Activated T-helper 1 cell treated with anti-CD3 and anti-CD28 coated beads, Interleukin-12 subunit alpha, Interleukin-12 subunit beta, Interleukin-2, Interleukin-4 antibody, amounts not matched to agents 30 ng/mL and 10 ng/mL and 1 ng/mL, durations not matched to agents 14 hours and 24 hours and 36 hours (primary cell): ENCODE measurements at regions of chr3 and their contacts with region 1.

Region 1: DNA sequence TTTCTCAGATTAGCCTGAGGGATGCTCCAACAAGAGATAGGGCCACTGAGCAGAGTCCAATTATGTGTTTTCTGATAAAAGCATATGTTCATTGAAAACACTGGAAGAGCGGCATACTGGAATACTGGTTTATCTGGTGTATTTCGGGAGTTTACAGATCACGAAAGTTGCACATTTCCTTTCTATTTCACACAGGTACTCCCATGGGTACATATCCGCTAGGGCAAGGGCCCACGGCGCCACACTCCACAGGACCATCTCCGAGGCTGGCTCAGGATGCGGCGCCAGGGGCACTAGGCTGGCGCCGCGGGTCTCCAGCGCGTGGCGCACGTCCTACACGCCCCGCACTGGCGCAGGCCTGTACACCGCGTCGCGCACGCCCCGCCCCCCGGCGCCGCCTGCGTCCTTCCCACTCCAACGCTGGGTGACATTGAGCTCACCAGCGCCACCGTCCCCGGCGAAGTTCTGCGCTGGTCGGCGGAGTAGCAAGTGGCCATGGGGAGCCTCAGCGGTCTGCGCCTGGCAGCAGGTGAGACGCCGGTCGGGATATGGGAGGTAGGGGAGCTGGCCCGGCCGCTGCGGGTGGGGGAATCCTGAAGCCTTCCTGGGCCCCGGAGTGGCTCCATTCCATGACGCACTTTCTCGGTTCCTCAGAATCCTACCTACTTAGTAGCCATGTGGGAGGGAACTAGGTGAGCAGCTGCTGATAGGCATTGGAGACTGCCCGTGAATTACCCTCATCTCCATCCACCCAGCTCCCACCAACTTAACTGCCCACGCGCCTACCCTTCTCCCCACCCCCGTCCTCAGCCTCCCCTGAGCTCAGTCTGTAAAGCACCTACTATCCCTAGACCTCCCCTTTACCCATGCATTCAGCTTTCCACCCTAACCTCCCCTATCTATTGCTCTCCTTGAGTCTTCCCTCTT is at the start of gene FAM162A:
- DNase-seq: peak; percentile 93
- H3K4me3 Mint-ChIP-seq: peak within 1 kb of the TSS; percentile 96
- H3K27ac Mint-ChIP-seq: peak within 1 kb of the TSS; percentile 90
- H3K4me1 Mint-ChIP-seq: peaks cover 81% of the 10 kb centered on the region
- H3K27me3 Mint-ChIP-seq: no peaks in the 10 kb centered on the region
- total RNA-seq, gene FAM162A: 63.7 and 70.0 TPM in 2 replicates

Region 2: DNA sequence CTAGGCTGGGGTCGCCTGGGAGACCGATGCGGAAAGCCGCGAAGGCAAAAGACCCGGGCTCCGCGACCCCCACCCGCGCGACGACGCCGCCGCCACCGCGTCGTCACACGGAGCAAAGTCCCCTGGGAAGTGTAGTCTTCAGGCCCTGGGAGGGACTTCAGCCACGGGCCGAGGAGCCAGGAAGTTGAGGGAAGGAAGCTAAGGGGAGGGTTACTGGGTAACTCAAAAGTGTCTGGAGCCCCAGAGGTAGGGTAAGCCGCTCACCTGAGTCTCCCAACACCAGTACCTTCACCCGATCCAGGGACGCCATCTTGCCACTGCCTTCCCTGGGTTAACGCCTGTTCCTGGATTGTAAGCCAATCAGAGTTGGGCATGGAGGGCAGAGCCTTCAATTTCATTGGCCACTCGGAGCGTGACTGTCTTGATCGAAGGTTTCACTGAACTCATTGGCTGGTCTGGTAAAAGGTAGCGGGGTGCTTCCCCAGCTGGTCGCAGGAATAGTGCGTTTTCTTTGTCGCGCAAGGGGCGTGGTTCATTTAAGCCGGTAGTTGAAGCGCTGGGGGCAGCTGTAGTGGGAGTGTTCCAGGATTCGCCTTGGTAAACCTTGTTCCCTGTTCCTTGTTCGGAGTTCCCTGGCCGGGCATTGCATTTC is 1641.7 kb before region 1 on chr3 and contains the starts of genes GTF2E1 and RABL3:
- intact Hi-C with region 1: loop called (anchors 10 kb)
- DNase-seq: peak; percentile 95
- H3K4me3 Mint-ChIP-seq: peak within 1 kb of the TSS; percentile 84
- H3K27ac Mint-ChIP-seq: peak within 1 kb of the TSS; percentile 89
- H3K4me1 Mint-ChIP-seq: peaks cover 22% of the 10 kb centered on the region
- H3K27me3 Mint-ChIP-seq: no peaks in the 10 kb centered on the region
- total RNA-seq, gene GTF2E1: 25.3 and 29.2 TPM in 2 replicates
- total RNA-seq, gene RABL3: 24.3 and 25.6 TPM in 2 replicates

Region 3: DNA sequence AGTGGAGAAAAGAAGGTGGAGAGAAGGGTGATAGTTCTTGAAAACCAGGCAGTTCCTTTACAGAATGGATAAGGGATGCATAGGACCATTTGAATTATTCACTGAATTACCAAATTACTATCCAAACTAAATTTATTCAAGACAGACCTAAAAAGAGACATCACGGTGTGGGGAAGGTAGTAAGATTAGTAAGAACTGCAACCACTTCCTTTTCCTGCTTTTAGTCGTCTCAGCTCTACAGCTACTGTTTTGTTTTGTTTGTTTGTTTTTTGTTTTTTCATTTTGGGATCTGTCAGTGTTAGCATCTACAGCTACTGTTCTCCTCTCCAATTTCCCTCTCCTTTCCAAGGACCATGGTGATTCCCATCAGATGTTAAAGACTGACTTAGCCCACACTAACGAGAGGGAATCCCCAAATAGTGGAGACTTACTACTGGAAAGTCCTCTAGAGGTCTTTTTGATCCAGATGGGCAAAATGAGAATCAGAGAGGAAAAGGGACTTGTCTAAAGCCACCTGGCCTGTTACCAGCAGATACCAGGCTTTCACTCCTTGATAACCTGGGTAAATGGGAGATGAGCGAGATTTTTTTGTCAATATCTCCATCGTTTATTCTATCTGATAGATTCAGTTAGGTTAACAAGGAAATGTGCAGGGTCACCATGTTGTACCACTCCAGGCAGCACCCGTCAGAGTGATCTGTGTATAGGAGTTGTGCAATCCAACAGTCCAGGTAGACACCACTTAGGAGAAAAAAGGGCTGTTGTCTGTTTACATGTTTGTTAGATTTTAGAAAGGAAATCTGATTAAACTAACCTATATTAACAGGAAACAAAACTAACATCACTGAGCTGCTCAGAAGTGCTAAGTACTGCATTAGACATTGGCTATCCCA is 729.3 kb before region 1 on chr3:
- intact Hi-C with region 1: loop called (anchors 5 kb)
- DNase-seq: peak; percentile 9
- H3K4me3 Mint-ChIP-seq: peak overlapping the region; percentile 50
- H3K27ac Mint-ChIP-seq: peak overlapping the region; percentile 79
- H3K4me1 Mint-ChIP-seq: peaks cover 87% of the 10 kb centered on the region
- H3K27me3 Mint-ChIP-seq: no peaks in the 10 kb centered on the region

Region 4: GRCh38 chr3:121749276-121750086 is 634.6 kb before region 1 on chr3 and contains the start of gene GOLGB1:
- intact Hi-C with region 1: loop called (anchors 1 kb)
- DNase-seq: peak; percentile 89
- H3K4me3 Mint-ChIP-seq: no peak within 1 kb of the TSS
- H3K27ac Mint-ChIP-seq: no peak within 1 kb of the TSS
- H3K4me1 Mint-ChIP-seq: peaks cover 5% of the 10 kb centered on the region
- H3K27me3 Mint-ChIP-seq: peaks cover 12% of the 10 kb centered on the region
- total RNA-seq, gene GOLGB1: 23.2 and 23.6 TPM in 2 replicates

Region 5: DNA sequence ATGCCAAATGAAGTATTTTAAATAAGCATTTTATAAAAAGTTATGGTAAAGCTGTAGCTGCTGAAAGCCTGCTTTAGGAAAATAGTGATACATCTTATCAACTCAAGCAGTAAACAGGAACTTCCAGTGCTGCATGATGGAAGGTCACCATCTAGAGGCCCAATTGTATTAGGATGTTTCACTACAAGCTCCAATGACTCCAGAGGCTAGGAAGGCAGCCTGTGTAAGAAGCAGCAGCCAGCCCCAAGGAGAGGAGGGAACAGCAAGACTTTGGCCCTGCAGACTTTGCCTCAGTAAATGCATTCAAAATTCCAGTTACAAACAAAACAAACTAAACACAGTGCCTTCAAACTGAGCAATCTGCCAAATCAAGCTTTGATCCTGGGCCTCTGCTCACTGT is 394.1 kb before region 1 on chr3:
- intact Hi-C with region 1: no loop called
- DNase-seq: no peak
- H3K4me3 Mint-ChIP-seq: no peak overlapping the region
- H3K27ac Mint-ChIP-seq: no peak overlapping the region
- H3K4me1 Mint-ChIP-seq: peaks cover 25% of the 10 kb centered on the region
- H3K27me3 Mint-ChIP-seq: peaks cover 3% of the 10 kb centered on the region

Region 6: GRCh38 chr3:122299872-122300460 is 84.1 kb before region 1 on chr3:
- intact Hi-C with region 1: loop called (anchors 1 kb)
- DNase-seq: no peak
- H3K4me3 Mint-ChIP-seq: no peak overlapping the region
- H3K27ac Mint-ChIP-seq: no peak overlapping the region
- H3K4me1 Mint-ChIP-seq: peaks cover 28% of the 10 kb centered on the region
- H3K27me3 Mint-ChIP-seq: no peaks in the 10 kb centered on the region

Region 7: DNA sequence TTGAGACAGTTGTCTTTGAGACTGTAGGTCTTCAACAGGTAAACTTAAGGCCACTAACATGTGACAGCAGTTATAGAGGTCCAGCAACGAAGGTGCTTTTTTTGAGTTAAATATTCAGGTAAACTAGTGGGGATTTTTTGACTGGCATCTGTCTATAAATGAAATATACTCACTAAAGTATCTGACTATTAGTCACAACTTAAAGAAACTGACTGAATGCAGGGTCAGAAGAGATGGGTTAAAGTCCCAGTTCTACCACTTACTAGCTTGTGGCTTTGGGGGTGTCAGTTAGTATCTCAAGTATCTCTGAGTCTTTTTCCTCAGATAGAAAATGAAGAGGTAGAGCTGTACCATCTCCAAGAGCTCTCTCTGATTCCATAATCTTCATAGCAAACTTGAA is 19.0 kb before region 1 on chr3:
- intact Hi-C with region 1: loop called (anchors 1 kb)
- DNase-seq: no peak
- H3K4me3 Mint-ChIP-seq: peak overlapping the region; percentile 42
- H3K27ac Mint-ChIP-seq: peak overlapping the region; percentile 91
- H3K4me1 Mint-ChIP-seq: peaks cover 47% of the 10 kb centered on the region
- H3K27me3 Mint-ChIP-seq: no peaks in the 10 kb centered on the region

Region 8: DNA sequence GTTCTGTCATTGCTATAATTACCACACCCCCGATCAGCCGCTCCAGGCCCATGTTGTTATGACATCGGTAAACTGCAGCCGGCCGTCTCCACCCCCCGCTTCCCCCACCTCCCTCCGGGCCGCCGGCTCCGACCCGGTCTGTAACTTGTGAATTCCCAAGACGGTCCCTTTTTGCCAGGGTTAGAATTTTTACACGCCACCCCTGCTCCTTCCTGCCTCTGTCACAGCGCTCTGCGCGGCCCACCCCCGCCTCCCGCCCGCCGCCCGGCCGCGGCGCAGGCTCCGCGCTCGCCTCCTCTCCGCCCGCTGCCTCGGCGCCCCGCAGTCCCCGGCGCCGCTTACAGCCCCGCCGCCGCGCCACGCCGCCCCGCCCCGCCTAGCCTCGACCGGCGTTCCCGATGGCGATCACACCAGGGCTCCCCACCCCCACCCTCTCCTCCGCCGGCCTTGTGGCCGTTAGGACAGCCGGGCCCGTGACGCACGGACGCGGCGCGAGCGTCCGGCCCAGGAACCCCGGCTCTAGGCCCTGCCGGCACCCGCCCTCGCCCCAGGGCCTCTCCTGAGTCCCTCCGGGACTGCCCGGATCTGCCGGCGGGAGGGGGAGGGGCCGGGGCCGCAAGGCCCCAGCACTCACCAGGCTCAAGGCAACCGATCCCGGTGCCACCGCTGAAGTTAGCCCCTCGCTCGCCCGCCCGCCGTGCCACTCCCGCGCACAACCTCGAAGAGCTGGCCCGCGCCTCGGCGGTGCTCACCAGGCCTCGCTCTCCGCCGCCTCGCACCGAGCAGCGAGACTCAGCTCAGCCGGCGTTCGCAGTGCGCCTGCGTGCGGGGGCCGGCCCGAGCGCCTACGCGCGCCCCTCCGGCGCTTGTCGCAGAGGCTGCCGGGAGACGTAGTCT is 130.3 kb after region 1 on chr3 and contains the start of gene KPNA1:
- intact Hi-C with region 1: loop called (anchors 1 kb)
- DNase-seq: peak; percentile 85
- H3K4me3 Mint-ChIP-seq: peak within 1 kb of the TSS; percentile 90
- H3K27ac Mint-ChIP-seq: peak within 1 kb of the TSS; percentile 92
- H3K4me1 Mint-ChIP-seq: peaks cover 46% of the 10 kb centered on the region
- H3K27me3 Mint-ChIP-seq: peaks cover 4% of the 10 kb centered on the region
- total RNA-seq, gene KPNA1: 81.7 and 88.2 TPM in 2 replicates